Psoas muscle (tissue), 8 donors: ENCODE measurements at regions of chr1 and their contacts with region 1.

Region 1: DNA sequence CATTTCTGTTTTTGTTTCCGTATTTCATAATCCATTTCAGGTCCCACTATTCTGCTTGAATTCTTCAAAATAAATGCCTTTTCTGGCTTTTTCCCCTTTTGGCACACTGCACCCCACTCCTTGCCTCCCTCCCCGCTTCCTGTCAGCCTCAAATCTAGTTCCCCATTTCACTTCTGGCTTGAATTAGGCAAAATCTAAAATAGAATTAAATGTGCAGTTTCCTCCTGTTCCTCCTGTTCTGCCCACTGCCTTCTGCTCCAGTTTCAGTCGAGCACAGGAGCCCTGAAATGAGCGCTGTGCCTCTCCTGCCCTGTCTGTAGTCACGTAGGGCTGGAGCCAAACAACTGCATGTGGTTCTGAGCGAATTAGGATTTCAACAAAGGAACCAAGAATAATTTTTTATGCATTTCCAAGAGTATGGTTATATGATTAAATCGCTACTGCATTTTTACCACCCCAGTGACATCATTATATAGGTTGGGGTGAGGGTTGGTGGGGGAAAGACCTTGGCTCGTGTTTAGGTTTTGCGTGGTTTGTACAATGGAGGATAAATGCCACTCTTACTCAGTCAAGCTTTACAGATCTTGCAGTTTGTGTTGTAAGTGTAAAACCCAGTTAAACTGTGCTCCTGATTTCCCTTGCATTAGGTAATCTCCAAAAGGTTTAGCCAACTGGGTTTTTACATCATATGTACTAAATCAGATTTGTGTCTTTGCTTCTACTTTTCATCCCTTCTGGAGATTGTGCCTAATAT is 114.9 kb downstream of the VPS13D start:
- DNase-seq: no peak
- ATAC-seq: peak in 2 of 4 donors; percentile 18 to 27
- H3K4me3 ChIP-seq: peak overlapping the region; percentile 48
- H3K27ac ChIP-seq: peak overlapping the region; percentile 54
- H3K4me1 ChIP-seq: peaks cover 33% of the 10 kb centered on the region
- H3K27me3 ChIP-seq: no peaks in the 10 kb centered on the region
- CTCF ChIP-seq: no peak

Region 2: DNA sequence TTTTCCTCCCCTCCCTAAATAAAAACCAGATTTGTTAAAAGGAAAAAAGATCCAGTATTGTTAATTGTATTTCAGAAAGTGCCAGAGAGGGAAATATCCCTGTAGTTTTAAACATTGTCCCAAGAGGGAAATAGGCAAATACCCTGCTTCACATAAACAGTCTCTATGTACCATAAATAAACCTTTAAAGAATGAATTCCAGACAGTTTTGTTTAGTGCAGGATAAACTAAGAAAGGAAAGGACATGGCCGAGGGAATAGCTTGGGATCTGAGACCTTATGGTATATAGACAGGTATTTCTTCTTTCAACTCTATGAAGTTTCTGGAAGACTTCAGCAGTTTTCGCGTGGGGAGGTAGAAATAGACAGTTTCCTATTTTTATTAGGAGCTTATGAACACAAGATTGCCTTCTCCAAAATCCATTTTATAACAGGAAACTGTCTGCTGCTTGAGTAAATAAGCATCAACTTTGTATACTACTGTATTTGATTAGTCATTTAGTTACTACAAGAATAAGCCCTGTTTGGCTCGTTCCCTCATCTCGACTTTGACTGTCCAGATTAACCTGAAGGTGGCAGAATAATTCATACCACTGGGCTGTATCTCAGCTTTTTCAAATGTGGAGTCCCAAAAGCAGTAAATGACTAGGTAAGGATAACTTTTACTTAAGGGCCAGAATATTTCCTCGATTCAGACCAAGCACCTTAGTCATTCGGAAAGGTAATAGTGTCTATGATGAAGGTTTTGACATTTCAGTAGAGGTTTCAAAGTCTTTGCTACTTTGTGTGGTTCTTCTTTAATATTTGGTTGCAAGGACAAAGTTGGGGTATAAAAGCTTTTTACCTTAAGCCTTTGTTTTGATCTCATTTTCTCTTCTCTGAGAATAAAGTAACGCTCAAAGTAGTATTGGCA is 62.5 kb after region 1 on chr1:
- intact Hi-C with region 1: loop called in 1 of 2 experiments (anchors 10 kb)
- DNase-seq: no peak
- ATAC-seq: peak; percentile 69 to 93 (median 86)
- H3K4me3 ChIP-seq: no peak overlapping the region
- H3K27ac ChIP-seq: peak overlapping the region; percentile 66
- H3K4me1 ChIP-seq: peaks cover 48% of the 10 kb centered on the region
- H3K27me3 ChIP-seq: no peaks in the 10 kb centered on the region
- CTCF ChIP-seq: peak; percentile 56

Region 3: DNA sequence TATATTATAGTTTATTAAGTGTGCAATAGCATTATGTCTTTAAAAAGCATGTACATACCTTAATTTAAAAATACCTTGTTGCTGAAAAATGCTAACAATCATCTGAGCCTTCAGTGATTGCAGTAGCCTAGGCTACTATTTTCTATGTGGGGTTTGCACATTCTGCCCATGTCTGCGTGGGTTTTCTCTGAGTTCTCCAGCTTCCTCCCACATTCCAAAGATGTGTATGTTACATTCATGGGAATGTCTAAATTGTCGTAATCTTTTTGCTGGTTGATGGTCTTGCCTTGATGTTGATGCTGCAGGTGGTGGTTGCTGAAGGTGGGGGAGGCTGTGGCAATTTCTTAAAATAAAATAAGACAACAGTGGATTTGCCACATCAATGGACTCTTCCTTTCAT is 383.6 kb after region 1 on chr1:
- intact Hi-C with region 1: no loop called
- DNase-seq: no peak
- ATAC-seq: no peak
- H3K4me3 ChIP-seq: no peak overlapping the region
- H3K27ac ChIP-seq: no peak overlapping the region
- H3K4me1 ChIP-seq: no peaks in the 10 kb centered on the region
- H3K27me3 ChIP-seq: no peaks in the 10 kb centered on the region
- CTCF ChIP-seq: no peak